MCF 10A (cell line): ENCODE measurements at regions of chr15 and their contacts with region 1.

Region 1: GRCh38 chr15:88904624-88905327 is 8.4 kb downstream of the MFGE8 start:
- DNase-seq: peak; percentile 80
- H3K4me3 Mint-ChIP-seq: no peak overlapping the region
- H3K27ac Mint-ChIP-seq: no peak overlapping the region
- H3K4me1 Mint-ChIP-seq: peaks cover 20% of the 10 kb centered on the region
- H3K27me3 Mint-ChIP-seq: no peaks in the 10 kb centered on the region
- CTCF ChIP-seq: peak; percentile 95

Region 2: DNA sequence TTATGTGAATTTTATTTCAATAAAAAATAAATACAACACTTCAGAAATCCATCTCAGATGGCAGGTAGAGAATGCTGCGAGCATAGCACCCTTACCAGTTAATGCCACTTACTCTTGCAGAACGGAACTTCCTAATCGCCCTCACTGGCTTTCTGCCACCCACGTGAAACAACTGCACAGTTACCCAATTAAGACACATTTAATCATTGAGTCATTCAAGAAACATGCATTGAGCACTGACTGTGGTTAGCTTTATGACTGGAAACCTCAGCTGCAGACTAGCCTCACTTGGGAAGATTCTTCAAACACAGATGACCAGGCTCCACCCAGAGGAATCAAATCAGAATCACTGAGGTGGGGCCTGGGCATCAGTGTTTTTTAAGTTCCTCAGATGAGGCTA is 14.0 kb after region 1 on chr15:
- CTCF ChIA-PET with region 1: interaction called, 64 read pairs
- POLR2A ChIA-PET with region 1: interaction called, 7 read pairs
- intact Hi-C with region 1: no loop called
- DNase-seq: peak; percentile 98
- H3K4me3 Mint-ChIP-seq: peak overlapping the region; percentile 20
- H3K27ac Mint-ChIP-seq: peak overlapping the region; percentile 62
- H3K4me1 Mint-ChIP-seq: peaks cover 38% of the 10 kb centered on the region
- H3K27me3 Mint-ChIP-seq: no peaks in the 10 kb centered on the region
- CTCF ChIP-seq: no peak

Region 3: GRCh38 chr15:89003865-89004725 is 99.3 kb after region 1 on chr15:
- CTCF ChIA-PET with region 1: interaction called, 7 read pairs
- POLR2A ChIA-PET with region 1: no interaction called
- intact Hi-C with region 1: loop called (anchors 1 kb)
- DNase-seq: peak; percentile 27
- H3K4me3 Mint-ChIP-seq: no peak overlapping the region
- H3K27ac Mint-ChIP-seq: no peak overlapping the region
- H3K4me1 Mint-ChIP-seq: peaks cover 5% of the 10 kb centered on the region
- H3K27me3 Mint-ChIP-seq: peaks cover 12% of the 10 kb centered on the region
- CTCF ChIP-seq: peak; percentile 9

Region 4: DNA sequence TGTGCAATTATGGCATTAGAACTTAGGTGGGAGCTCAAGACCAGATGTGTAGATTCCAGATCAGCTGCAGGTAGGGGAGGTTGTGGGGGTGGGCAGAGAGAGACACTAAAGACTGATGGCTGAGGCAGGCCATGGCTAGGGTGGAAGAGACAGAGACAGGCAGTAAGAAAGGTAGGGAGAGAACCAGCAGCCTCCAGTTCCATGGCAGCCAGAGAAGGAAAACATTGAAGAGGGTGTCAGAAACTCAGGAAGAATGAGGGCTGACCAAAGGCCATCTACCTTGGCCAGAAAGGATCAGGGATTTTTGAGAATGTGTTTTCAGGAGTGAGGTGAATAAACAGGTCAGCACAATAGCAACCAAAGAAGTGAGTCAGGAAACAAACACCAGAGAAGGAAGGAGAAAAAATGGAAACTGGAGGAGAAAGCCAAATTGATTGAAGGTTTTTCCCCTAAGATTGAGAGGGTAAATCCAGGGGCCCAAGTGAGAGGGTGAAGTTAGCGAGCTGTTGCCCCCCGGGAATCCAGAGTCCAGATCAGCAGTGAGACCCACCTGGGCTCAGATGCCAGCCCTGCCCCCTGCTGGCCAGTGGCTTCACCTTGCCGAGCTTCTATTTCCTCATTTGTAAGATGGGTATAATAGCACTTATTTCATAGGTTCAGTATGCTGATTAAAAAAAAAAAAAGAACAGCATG is 224.5 kb after region 1 on chr15:
- CTCF ChIA-PET with region 1: interaction called, 6 read pairs
- POLR2A ChIA-PET with region 1: no interaction called
- intact Hi-C with region 1: loop called (anchors 1 kb)
- DNase-seq: peak; percentile 60
- H3K4me3 Mint-ChIP-seq: no peak overlapping the region
- H3K27ac Mint-ChIP-seq: no peak overlapping the region
- H3K4me1 Mint-ChIP-seq: peaks cover 5% of the 10 kb centered on the region
- H3K27me3 Mint-ChIP-seq: no peaks in the 10 kb centered on the region
- CTCF ChIP-seq: peak; percentile 65